AG04449 (cell line): ENCODE measurements at regions of chr1 and their contacts with region 1.

Region 1: DNA sequence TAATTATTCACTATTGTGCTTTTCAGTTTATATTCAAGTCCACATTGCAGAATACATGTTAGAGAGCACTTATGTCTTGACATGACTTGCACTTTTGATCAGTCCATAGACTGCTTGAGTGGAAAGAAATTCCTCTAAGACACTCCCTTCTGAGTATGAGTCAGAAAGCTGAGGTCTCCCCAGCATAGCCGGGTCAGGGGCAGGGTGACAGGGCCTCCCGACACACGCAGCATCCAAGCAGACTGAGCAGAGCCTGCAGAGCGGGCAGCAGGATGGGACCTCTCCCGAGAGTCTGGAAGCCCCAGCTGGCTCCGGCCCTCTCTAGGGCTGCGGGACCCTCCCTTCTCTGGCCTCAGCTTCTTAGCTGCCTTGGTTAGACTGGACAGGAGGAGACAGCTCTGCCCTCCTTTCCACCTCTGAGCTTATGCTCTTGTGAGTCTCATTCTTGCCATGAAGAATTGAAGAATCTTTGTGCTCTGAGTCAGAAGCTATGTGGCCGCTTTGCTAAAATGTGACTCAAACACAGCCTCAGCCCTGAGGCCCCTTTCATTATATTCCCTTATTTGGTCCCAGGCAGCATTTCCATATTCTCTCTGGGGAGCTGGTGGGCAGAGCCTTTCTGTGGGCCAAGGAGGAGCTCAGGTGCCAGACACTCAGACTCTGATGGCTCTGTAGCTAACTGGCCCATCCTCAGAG is 11.2 kb upstream of the CAPN2 start:
- DNase-seq: peak; percentile 97
- H3K4me3 ChIP-seq: peak overlapping the region; percentile 52
- CTCF ChIP-seq: no peak

Region 2: GRCh38 chr1:223712194-223712849 is 11.2 kb after region 1 on chr1 and contains the start of gene CAPN2:
- CTCF ChIA-PET with region 1: interaction called, 14 read pairs
- POLR2A ChIA-PET with region 1: interaction called, 16 read pairs
- DNase-seq: no peak
- H3K4me3 ChIP-seq: peak within 1 kb of the TSS; percentile 95
- CTCF ChIP-seq: peak; percentile 73

Region 3: GRCh38 chr1:224106568-224107281 is 405.6 kb after region 1 on chr1:
- CTCF ChIA-PET with region 1: interaction called, 10 read pairs
- POLR2A ChIA-PET with region 1: no interaction called
- DNase-seq: no peak
- H3K4me3 ChIP-seq: no peak overlapping the region
- CTCF ChIP-seq: peak; percentile 39